ENCODE measurements at regions of chr2 and their contacts with region 1.

Region 1: DNA sequence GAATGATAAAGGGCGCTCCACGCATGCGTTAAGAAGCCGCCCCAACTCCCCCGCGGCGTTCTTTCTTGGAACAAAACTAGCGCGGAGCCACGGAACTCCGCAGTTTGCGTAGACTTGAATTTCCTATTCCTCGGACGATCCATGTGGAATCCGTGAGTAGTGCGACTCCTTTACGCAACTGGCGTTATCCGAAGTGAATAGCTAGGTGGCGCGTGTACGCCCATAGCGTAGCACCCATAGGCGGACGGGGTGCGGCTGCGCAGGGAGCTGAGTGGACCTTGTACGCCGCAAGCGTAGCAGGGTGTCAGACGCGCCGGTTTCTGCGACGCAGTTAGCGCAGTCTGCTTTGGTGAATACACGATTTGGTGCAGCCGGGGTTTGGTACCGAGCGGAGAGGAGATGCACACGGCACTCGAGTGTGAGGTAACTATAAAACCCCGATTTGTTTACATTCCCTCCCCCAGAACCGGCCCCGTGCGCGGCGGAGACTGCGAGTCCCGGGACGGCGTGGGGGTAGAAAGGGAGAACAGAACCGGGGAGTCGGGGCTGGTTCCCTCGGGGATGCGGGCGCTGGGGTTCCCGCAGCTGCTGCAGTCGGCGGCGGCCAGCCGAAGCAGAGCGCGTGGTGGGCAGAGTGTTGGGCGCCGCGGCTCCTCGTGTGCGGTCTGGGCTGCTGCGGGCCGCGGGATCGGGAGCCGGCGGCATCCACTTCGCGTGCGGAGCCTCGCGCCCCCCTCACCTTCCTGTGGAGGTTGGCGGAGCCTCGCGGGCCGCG is at the start of gene SLC39A10:
- DNase-seq: peak; percentile 86 to 99
- H3K4me3 ChIP-seq: peak within 1 kb of the TSS; percentile 91 to 97 (median 94)
- H3K27ac ChIP-seq: peak within 1 kb of the TSS; percentile 88
- H3K4me1 ChIP-seq: peaks cover 2 to 10% (median 4%) of the 10 kb centered on the region in 4 experiments; a peak in 5 of 7 replicates
- H3K27me3 ChIP-seq: no peaks in the 10 kb centered on the region
- CTCF ChIP-seq: no peak
- EP300 ChIP-seq: no peak
- POLR2A ChIP-seq: peak; percentile 63 to 87
- RAD21 ChIP-seq: no peak; a peak in 2 of 4 replicates
- total RNA-seq, gene SLC39A10: 219 and 234 TPM in 2 replicates

Region 2: GRCh38 chr2:195498176-195498575 is 158.9 kb before region 1 on chr2:
- CTCF ChIA-PET with region 1: interaction called, 32 read pairs
- POLR2A ChIA-PET with region 1: no interaction called
- DNase-seq: peak in 1 of 2 experiments; percentile 13
- H3K4me3 ChIP-seq: no peak overlapping the region
- H3K27ac ChIP-seq: no peak overlapping the region
- H3K4me1 ChIP-seq: no peaks in the 10 kb centered on the region
- H3K27me3 ChIP-seq: no peaks in the 10 kb centered on the region
- CTCF ChIP-seq: peak in 2 of 3 experiments; percentile 51 to 58; a peak in 3 of 4 replicates
- EP300 ChIP-seq: no peak
- POLR2A ChIP-seq: no peak
- RAD21 ChIP-seq: peak; percentile 51 to 70

Region 3: DNA sequence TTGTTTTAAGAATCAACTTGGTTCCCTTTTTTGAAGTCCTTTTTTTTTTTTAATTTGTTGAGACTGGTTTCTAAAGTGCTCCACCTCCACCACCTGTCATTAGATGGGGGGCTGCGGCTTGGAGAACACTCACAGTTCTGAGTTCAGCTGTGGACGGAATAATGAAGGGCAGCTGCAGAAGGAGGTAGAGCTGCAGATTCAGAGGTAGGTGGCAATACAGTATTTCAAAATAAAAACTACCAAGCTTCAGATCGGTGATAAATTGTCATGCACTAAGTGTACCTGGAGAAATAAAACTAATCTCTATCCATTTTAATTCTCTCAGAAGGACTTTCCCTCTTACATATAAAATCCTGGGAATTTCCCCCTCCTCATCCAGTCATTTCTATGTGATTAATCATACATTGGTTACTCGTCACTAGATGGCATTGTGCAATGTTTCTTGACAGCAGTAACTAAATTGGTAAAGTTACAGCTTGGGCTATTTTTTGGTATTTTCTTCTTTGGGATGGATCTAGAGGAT is 81.1 kb before region 1 on chr2:
- CTCF ChIA-PET with region 1: interaction called, 40 read pairs
- POLR2A ChIA-PET with region 1: no interaction called
- DNase-seq: no peak
- H3K4me3 ChIP-seq: no peak overlapping the region
- H3K27ac ChIP-seq: no peak overlapping the region
- H3K4me1 ChIP-seq: no peaks in the 10 kb centered on the region
- H3K27me3 ChIP-seq: no peaks in the 10 kb centered on the region
- CTCF ChIP-seq: peak in 1 of 3 experiments; percentile 12; a peak in 1 of 4 replicates
- EP300 ChIP-seq: no peak
- POLR2A ChIP-seq: no peak
- RAD21 ChIP-seq: peak; percentile 43 to 54

Region 4: GRCh38 chr2:195595825-195596224 is 61.2 kb before region 1 on chr2:
- CTCF ChIA-PET with region 1: interaction called, 5 read pairs
- POLR2A ChIA-PET with region 1: interaction called, 16 read pairs
- DNase-seq: no peak
- H3K4me3 ChIP-seq: no peak overlapping the region
- H3K27ac ChIP-seq: no peak overlapping the region
- H3K4me1 ChIP-seq: peaks cover 0 to 15% (median 5%) of the 10 kb centered on the region in 4 experiments; a peak in 5 of 7 replicates
- H3K27me3 ChIP-seq: no peaks in the 10 kb centered on the region
- CTCF ChIP-seq: no peak
- EP300 ChIP-seq: no peak
- POLR2A ChIP-seq: no peak
- RAD21 ChIP-seq: no peak

Region 5: DNA sequence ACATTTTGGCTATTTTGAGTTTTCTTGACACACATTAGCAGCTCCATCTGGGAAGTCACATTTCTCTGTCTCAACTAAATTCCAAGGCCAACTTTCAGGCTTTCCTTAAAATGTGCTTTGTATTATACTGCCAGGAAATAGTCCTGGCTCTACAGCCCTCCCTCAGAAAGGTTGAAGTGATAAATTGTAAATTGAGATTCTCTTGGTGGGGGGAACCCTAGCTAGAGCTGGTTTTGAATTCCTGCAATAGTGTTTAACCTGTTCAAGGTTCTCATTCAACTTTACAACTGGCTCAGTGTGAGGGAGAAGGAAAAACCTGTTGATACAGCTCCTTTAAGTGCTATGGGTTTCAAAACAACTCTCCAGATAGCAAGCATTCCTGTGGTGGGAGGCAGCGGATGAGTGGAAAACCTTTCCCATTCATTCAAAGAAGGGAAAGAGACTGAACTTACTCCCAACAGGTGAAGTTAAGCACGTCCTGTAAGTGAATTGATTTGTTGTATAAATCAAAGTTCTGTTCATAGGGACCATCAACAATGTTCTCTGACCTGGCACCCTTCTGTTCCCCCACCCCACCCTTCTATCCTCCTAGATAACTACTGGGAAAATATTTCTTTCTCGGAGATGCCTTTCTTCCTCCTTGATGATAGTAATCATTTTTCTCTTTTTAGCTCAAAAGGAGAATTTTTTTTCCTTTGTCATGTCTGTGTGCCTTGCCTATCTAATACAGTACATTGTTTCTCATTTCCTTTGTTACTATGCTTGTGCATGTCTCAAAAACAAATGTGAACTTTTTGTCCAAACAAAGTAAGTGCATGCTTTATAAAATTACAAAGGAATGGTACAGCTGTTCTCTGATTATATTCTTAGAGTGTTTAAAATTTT is 44.2 kb before region 1 on chr2:
- CTCF ChIA-PET with region 1: interaction called, 6 read pairs
- POLR2A ChIA-PET with region 1: interaction called, 17 read pairs
- DNase-seq: peak in 1 of 2 experiments; percentile 72
- H3K4me3 ChIP-seq: peak overlapping the region; percentile 19 to 50 (median 21); a peak in 6 of 8 replicates
- H3K27ac ChIP-seq: peak overlapping the region; percentile 77
- H3K4me1 ChIP-seq: peaks cover 2 to 18% (median 6%) of the 10 kb centered on the region in 4 experiments; a peak in 6 of 7 replicates
- H3K27me3 ChIP-seq: no peaks in the 10 kb centered on the region
- CTCF ChIP-seq: no peak
- EP300 ChIP-seq: peak in 1 of 2 experiments; percentile 78; a peak in 1 of 3 replicates
- POLR2A ChIP-seq: peak in 1 of 2 experiments; percentile 80; a peak in 2 of 3 replicates
- RAD21 ChIP-seq: 0 out of 4 replicates have a peak, but pooled peaks of 1 of the 2 experiments have one; percentile 7

Region 6: GRCh38 chr2:195672668-195673067 is 15.6 kb after region 1 on chr2:
- CTCF ChIA-PET with region 1: interaction called, 15 read pairs
- POLR2A ChIA-PET with region 1: interaction called, 21 read pairs
- DNase-seq: no peak
- H3K4me3 ChIP-seq: no peak overlapping the region
- H3K27ac ChIP-seq: no peak overlapping the region
- H3K4me1 ChIP-seq: peaks cover 0 to 2% (median 0%) of the 10 kb centered on the region in 4 experiments; a peak in 1 of 7 replicates
- H3K27me3 ChIP-seq: no peaks in the 10 kb centered on the region
- CTCF ChIP-seq: peak in 1 of 3 experiments; percentile 60; a peak in 2 of 4 replicates
- EP300 ChIP-seq: no peak
- POLR2A ChIP-seq: no peak
- RAD21 ChIP-seq: peak in 1 of 2 experiments; percentile 27; a peak in 3 of 4 replicates

Measured in H1 (cell line).